ENCODE measurements at regions of chr3 and their contacts with region 1.

Region 1: GRCh38 chr3:185176750-185177359 is 24.0 kb upstream of the C3orf70 start:
- DNase-seq: peak; percentile 48
- H3K4me3 ChIP-seq: no peak overlapping the region
- H3K27ac ChIP-seq: no peak overlapping the region
- H3K4me1 ChIP-seq: no peaks in the 10 kb centered on the region
- H3K27me3 ChIP-seq: peaks cover 3 to 5% of the 10 kb centered on the region in 2 experiments
- CTCF ChIP-seq: peak; percentile 46 to 60
- POLR2A ChIP-seq: no peak

Region 2: GRCh38 chr3:184459355-184459754 is 717.5 kb before region 1 on chr3:
- CTCF ChIA-PET with region 1: no interaction called
- POLR2A ChIA-PET with region 1: no interaction called
- dilution Hi-C with region 1: no loop called
- intact Hi-C with region 1: no loop called
- DNase-seq: peak; percentile 95
- H3K4me3 ChIP-seq: no peak overlapping the region
- H3K27ac ChIP-seq: peak overlapping the region; percentile 98
- H3K4me1 ChIP-seq: peaks cover 16% of the 10 kb centered on the region
- H3K27me3 ChIP-seq: no peaks in the 10 kb centered on the region
- CTCF ChIP-seq: no peak
- POLR2A ChIP-seq: peak; percentile 53

Region 3: GRCh38 chr3:184868477-184868876 is 308.4 kb before region 1 on chr3:
- CTCF ChIA-PET with region 1: interaction called, 121 read pairs
- POLR2A ChIA-PET with region 1: no interaction called
- dilution Hi-C with region 1: loop called (anchors 25 kb)
- intact Hi-C with region 1: no loop called
- DNase-seq: peak; percentile 49
- H3K4me3 ChIP-seq: no peak overlapping the region
- H3K27ac ChIP-seq: peak overlapping the region; percentile 39
- H3K4me1 ChIP-seq: peaks cover 9% of the 10 kb centered on the region
- H3K27me3 ChIP-seq: no peaks in the 10 kb centered on the region
- CTCF ChIP-seq: no peak
- POLR2A ChIP-seq: no peak

Region 4: DNA sequence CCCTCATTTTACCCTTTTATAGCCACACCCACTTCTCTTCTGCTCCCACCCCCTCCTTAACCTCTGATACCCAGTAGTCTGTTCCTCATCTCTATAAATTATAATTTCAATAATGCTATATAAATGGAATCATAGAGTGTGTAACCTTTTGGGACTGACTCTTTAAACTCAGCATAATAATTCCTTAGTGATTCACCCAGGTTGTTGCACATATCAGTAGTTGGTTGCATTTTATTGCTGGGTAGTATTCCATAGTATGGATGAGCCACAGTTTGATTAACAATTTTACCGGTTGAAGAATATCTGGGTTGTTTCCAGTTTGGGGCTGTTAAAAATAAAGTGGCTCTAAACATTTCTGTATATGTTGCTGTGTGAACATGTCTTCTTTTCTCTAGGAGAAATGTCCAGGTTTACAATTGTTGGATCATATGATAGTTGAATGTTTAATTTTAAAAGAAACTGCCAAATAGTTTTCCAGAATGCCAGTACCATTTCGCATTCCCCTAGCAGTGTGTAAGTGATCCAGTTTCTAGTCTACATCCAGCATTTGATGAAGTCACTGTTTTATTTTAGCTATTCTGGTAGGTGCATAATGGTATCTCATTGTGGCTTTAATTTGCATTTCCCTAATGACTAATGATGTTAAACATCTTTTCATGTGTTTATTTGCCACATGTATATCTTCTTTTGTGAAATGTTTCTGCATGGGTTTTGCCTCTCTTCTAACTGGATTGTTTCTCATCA is 296.4 kb before region 1 on chr3:
- CTCF ChIA-PET with region 1: interaction called, 121 read pairs
- POLR2A ChIA-PET with region 1: no interaction called
- dilution Hi-C with region 1: no loop called
- intact Hi-C with region 1: loop called (anchors 1 kb)
- DNase-seq: no peak
- H3K4me3 ChIP-seq: no peak overlapping the region
- H3K27ac ChIP-seq: no peak overlapping the region
- H3K4me1 ChIP-seq: no peaks in the 10 kb centered on the region
- H3K27me3 ChIP-seq: no peaks in the 10 kb centered on the region
- CTCF ChIP-seq: no peak
- POLR2A ChIP-seq: no peak

Region 5: GRCh38 chr3:185215873-185216606 is 39.2 kb after region 1 on chr3:
- CTCF ChIA-PET with region 1: no interaction called
- POLR2A ChIA-PET with region 1: no interaction called
- dilution Hi-C with region 1: no loop called
- intact Hi-C with region 1: loop called (anchors 1 kb)
- DNase-seq: peak; percentile 55
- H3K4me3 ChIP-seq: peak overlapping the region in 2 of 3 experiments; percentile 4 to 27
- H3K27ac ChIP-seq: no peak overlapping the region
- H3K4me1 ChIP-seq: peaks cover 6% of the 10 kb centered on the region
- H3K27me3 ChIP-seq: no peaks in the 10 kb centered on the region
- CTCF ChIP-seq: peak; percentile 19 to 27
- POLR2A ChIP-seq: no peak

Region 6: GRCh38 chr3:185308126-185308754 is 131.4 kb after region 1 on chr3:
- CTCF ChIA-PET with region 1: interaction called, 3 read pairs
- POLR2A ChIA-PET with region 1: no interaction called
- dilution Hi-C with region 1: no loop called
- intact Hi-C with region 1: loop called (anchors 1 kb)
- DNase-seq: peak; percentile 68
- H3K4me3 ChIP-seq: no peak overlapping the region
- H3K27ac ChIP-seq: no peak overlapping the region
- H3K4me1 ChIP-seq: no peaks in the 10 kb centered on the region
- H3K27me3 ChIP-seq: no peaks in the 10 kb centered on the region
- CTCF ChIP-seq: peak; percentile 64 to 77
- POLR2A ChIP-seq: no peak

Region 7: DNA sequence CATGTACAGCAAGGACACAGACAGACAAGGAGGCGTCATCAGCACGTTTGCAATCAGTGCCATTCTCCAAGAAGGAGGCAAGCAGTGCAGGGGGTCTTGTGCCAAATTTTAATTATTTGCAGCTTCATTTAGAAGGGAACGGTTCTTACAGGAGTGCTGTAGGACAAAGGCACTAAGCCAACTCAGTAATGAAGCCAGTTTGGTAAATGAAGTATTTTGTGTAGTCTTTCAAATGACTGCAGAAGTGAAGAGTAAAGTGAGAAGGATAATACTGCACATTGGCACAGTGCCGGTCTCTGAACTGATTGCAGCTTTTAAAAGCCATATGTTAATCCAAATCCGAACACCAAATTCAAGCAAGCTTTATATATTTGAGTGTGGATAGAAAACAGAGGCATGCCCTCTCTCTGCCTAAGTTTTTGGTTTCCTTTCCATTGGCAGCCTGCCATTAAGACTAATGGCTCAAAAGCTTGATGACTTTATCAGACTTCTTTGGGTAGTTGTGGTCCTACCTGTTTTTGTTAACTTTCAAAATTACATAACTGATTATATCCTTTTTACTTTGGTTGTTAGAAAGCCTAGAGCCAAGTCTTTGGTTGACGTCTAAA is 510.5 kb after region 1 on chr3:
- CTCF ChIA-PET with region 1: no interaction called
- POLR2A ChIA-PET with region 1: no interaction called
- dilution Hi-C with region 1: no loop called
- intact Hi-C with region 1: no loop called
- DNase-seq: no peak
- H3K4me3 ChIP-seq: no peak overlapping the region
- H3K27ac ChIP-seq: peak overlapping the region; percentile 93
- H3K4me1 ChIP-seq: peaks cover 19% of the 10 kb centered on the region
- H3K27me3 ChIP-seq: no peaks in the 10 kb centered on the region
- CTCF ChIP-seq: no peak
- POLR2A ChIP-seq: no peak